T-cell (primary cell): ENCODE measurements at regions of chr19 and their contacts with region 1.

Region 1: GRCh38 chr19:29596885-29597525 is 9.1 kb upstream of the POP4 start:
- DNase-seq: peak in 1 of 35 experiments; percentile 35
- ATAC-seq: no peak
- H3K4me3 ChIP-seq: no peak overlapping the region
- H3K4me3 Mint-ChIP-seq: no peak overlapping the region
- H3K27ac ChIP-seq: no peak overlapping the region
- H3K27ac Mint-ChIP-seq: no peak overlapping the region
- H3K4me1 ChIP-seq: no peaks in the 10 kb centered on the region
- H3K4me1 Mint-ChIP-seq: no peaks in the 10 kb centered on the region
- H3K27me3 ChIP-seq: peaks cover 2 to 35% of the 10 kb centered on the region in 2 experiments
- H3K27me3 Mint-ChIP-seq: peaks cover 23 to 39% of the 10 kb centered on the region in 2 donors

Region 2: GRCh38 chr19:29201855-29202254 is 395.1 kb before region 1 on chr19:
- CTCF ChIA-PET with region 1: interaction called in 1 of 2 experiments, 10 read pairs
- POLR2A ChIA-PET with region 1: no interaction called
- DNase-seq: no peak
- ATAC-seq: no peak
- H3K4me3 ChIP-seq: no peak overlapping the region
- H3K4me3 Mint-ChIP-seq: no peak overlapping the region
- H3K27ac ChIP-seq: no peak overlapping the region
- H3K27ac Mint-ChIP-seq: no peak overlapping the region
- H3K4me1 ChIP-seq: no peaks in the 10 kb centered on the region
- H3K4me1 Mint-ChIP-seq: peaks cover 8 to 18% (median 18%) of the 10 kb centered on the region in 3 donors
- H3K27me3 ChIP-seq: no peaks in the 10 kb centered on the region
- H3K27me3 Mint-ChIP-seq: no peaks in the 10 kb centered on the region

Region 3: DNA sequence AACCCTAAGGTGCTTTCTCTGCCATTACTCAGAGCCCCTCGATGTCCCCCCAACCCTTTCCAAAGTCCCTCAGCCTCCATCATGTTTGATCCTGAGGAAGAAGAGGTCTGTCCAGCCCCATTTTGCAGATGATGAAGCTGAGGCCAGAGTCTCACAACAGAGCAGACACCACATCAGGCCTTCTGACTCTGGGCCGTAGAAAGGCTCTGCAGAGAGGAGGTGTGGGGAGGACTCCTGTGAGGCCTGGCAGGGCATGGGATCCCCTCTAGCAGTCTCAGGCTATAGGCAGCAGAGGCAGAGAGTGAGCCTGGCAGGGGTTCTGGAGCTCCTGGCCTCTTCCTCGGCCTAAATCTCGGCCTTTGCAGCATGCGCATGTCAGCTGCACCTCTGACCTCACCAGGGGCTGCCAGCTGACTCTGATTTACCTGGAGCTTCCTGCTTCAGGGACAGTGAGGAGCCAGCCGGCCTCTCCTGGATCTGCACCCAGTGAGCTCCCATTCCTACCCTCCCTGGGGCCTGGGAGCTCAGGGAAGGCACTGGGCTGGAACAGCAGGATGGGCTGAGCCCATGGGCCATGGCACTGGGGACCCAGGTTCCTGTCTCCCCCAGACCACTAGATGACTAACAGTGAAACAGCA is 112.9 kb before region 1 on chr19:
- CTCF ChIA-PET with region 1: no interaction called
- POLR2A ChIA-PET with region 1: no interaction called
- DNase-seq: no peak
- ATAC-seq: no peak
- H3K4me3 ChIP-seq: no peak overlapping the region
- H3K4me3 Mint-ChIP-seq: no peak overlapping the region
- H3K27ac ChIP-seq: no peak overlapping the region
- H3K27ac Mint-ChIP-seq: no peak overlapping the region
- H3K4me1 ChIP-seq: no peaks in the 10 kb centered on the region
- H3K4me1 Mint-ChIP-seq: no peaks in the 10 kb centered on the region
- H3K27me3 ChIP-seq: peaks cover 0 to 54% of the 10 kb centered on the region in 2 experiments
- H3K27me3 Mint-ChIP-seq: peaks cover 19 to 23% of the 10 kb centered on the region in 2 donors

Region 4: GRCh38 chr19:29576761-29577648 is 20.0 kb before region 1 on chr19:
- CTCF ChIA-PET with region 1: no interaction called
- POLR2A ChIA-PET with region 1: no interaction called
- DNase-seq: no peak
- ATAC-seq: no peak
- H3K4me3 ChIP-seq: no peak overlapping the region
- H3K4me3 Mint-ChIP-seq: no peak overlapping the region
- H3K27ac ChIP-seq: no peak overlapping the region
- H3K27ac Mint-ChIP-seq: no peak overlapping the region
- H3K4me1 ChIP-seq: no peaks in the 10 kb centered on the region
- H3K4me1 Mint-ChIP-seq: peaks cover 0 to 6% (median 5%) of the 10 kb centered on the region in 3 donors
- H3K27me3 ChIP-seq: peaks cover 10 to 36% of the 10 kb centered on the region in 2 experiments
- H3K27me3 Mint-ChIP-seq: peaks cover 49 to 53% of the 10 kb centered on the region in 2 donors